Activated CD4-positive, alpha-beta T cell treated with anti-CD3 and anti-CD28 coated beads, Interleukin-2, amount 10 ng/mL, durations not matched to agents 24 days and 14 days (primary cell): ENCODE measurements at regions of chr17 and their contacts with region 1.

Region 1: DNA sequence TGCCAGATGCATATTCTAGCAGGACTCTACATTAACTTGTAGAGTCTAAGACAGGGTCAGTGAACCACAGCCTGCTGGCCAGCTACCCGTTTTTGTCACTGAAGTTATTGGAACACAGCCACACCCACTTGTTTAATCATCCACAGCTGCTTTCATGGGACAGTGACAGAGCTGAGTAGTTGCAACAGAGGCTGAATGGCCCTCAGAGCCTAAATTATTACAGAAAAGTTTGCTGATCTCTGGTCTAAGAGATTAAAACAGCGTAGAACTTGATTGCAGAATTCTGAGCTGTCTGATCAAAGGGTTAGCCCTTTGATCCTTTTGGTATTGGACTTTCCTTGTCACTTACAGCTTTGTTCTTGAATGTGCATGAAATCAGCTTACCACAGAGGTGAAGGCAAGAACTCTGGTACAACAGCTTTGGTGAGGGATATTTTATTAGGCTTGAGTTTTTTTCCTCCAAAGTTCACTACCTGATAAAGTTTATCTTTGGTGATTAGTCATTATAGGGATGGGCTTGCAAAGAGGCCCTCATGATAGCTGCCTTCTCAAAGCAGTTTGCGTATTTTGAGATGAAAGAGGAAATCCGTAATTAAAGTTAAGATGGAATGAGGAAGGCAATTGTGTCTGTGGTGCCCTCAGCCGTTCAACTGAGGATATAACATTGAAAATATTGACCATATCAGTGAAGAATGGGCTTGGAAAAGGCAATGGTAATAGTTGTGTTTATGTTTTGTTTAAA is 23.6 kb downstream of the ALDH3A2 start:
- DNase-seq: no peak
- H3K4me3 Mint-ChIP-seq: no peak overlapping the region
- H3K27ac Mint-ChIP-seq: no peak overlapping the region
- H3K4me1 Mint-ChIP-seq: peaks cover 2% of the 10 kb centered on the region
- H3K27me3 Mint-ChIP-seq: no peaks in the 10 kb centered on the region

Region 2: DNA sequence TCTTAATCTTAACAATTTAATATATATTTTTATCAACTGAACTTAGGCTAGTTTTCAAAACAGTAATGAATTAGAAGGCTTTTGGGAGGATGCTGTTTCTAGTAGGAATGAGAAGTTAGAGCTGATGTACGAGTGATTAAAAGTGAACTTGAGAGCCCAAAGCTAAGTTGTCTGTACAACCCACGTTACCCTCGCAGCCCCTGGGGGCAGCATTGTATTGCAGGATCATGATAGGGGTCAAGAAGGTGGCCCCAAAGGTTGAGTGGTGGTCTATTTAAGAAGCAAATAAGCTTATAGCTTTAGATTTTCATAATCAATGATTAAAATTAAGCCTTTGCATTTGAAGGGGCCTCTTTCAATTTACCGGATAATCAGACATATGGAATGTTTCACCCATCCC is 57.3 kb before region 1 on chr17:
- intact Hi-C with region 1: loop called (anchors 10 kb)
- DNase-seq: no peak
- H3K4me3 Mint-ChIP-seq: no peak overlapping the region
- H3K27ac Mint-ChIP-seq: no peak overlapping the region
- H3K4me1 Mint-ChIP-seq: no peaks in the 10 kb centered on the region
- H3K27me3 Mint-ChIP-seq: no peaks in the 10 kb centered on the region